ENCODE measurements at regions of chrX and their contacts with region 1.

Region 1: DNA sequence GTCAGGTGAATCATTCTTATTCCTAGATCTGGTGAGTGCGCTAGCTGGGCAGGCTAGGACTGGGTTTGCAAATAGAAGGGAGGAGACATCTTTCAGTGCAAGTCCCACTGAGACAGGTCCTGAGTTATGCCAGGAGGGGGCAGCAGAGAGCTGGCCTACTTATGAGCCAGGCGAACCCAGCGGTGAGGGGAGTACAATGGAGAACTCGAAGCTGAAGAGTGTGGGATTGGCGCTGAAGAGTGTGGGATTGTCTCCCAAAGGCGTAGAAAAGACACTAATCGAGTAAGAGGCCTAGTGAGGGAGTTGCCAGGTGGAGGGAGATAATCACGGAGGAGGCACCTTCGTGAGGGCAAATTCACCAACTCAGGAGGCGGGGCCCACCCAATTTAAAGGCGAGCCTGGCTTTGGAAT is 91.7 kb upstream of the CXorf66 start:
- DNase-seq: peak; percentile 4
- H3K4me3 Mint-ChIP-seq: no peak overlapping the region
- H3K27ac Mint-ChIP-seq: no peak overlapping the region
- H3K4me1 Mint-ChIP-seq: no peaks in the 10 kb centered on the region
- H3K27me3 Mint-ChIP-seq: no peaks in the 10 kb centered on the region

Region 2: GRCh38 chrX:140141444-140142029 is 84.5 kb after region 1 on chrX:
- intact Hi-C with region 1: loop called (anchors 1 kb)
- DNase-seq: no peak
- H3K4me3 Mint-ChIP-seq: no peak overlapping the region
- H3K27ac Mint-ChIP-seq: no peak overlapping the region
- H3K4me1 Mint-ChIP-seq: no peaks in the 10 kb centered on the region
- H3K27me3 Mint-ChIP-seq: no peaks in the 10 kb centered on the region

Measured in activated T-helper 1 cell treated with anti-CD3 and anti-CD28 coated beads, Interleukin-12 subunit alpha, Interleukin-12 subunit beta, Interleukin-2, Interleukin-4 antibody, amounts not matched to agents 30 ng/mL and 10 ng/mL and 1 ng/mL, durations not matched to agents 14 hours and 24 hours and 36 hours (primary cell).